A549 (cell line): ENCODE measurements at regions of chr1 and their contacts with region 1.

Region 1: DNA sequence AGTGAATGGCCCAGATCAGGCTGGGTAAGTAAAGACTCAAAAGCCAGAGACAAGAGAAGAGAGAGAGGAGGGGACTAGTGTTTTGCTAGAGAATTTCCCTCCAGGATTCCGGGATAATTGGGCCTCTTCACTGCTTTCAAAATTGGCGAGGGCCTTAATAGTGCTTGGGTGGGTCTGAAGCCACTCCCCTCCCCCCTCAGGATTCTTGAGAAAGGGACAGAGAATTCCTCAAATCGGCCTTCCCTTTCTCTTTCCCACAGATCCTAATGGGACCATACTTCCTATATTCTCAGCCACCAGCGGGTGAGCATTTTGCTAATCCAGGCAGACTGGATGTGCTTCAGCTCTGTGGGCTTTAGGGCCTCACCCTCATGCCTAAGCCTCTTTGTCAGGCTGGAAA is 11.9 kb downstream of the SFN start:
- DNase-seq: no peak
- ATAC-seq: no peak
- H3K4me3 ChIP-seq: no peak overlapping the region
- H3K27ac ChIP-seq: no peak overlapping the region
- H3K4me1 ChIP-seq: no peaks in the 10 kb centered on the region
- CTCF ChIP-seq: no peak
- EP300 ChIP-seq: no peak
- POLR2A ChIP-seq: no peak
- RAD21 ChIP-seq: no peak

Region 2: DNA sequence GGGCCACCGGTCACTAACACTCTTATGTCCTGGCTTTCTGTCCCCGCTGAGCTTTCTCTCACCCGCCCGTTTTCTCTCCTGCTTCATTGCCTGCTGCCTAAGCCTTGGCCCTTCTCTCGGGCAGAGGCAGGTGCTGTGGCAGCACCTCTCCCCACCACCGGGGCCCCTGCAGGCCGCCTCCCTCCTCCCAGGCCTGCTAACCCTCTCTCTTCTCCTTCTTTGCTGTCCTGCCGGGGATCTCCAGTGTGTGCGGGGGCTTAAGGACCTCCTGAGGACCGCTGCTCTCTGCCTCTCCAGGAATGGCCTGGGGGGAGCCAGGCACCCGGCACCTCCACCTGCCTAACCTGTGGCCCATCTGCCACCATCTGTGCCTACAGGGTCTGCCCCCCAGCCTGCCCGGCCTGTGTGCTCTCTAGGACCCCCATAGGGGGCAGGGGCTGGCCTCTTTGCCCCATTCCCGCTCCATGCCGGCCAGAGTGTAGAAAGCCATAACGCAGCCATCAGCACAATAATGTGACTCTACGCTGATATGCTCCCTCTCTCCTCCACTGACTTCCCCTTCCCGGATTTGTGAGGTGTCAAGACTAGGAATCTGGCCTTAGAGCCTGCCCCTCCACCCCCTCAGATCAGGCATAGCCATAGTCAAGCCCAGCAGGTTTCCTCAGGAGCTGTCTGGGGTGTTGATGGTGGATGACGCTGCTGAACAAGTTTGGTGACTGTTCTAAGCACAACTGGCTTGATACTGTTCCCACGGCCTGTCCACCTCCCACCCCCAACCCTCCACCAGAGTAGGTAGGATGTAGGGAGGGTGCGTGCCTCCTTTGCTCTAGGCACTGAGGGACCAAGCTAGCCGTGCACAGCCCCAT is 18.1 kb before region 1 on chr1:
- CTCF ChIA-PET with region 1: interaction called, 16 read pairs
- POLR2A ChIA-PET with region 1: no interaction called
- DNase-seq: no peak
- ATAC-seq: no peak
- H3K4me3 ChIP-seq: no peak overlapping the region
- H3K27ac ChIP-seq: no peak overlapping the region; a peak in 1 of 6 replicates
- H3K4me1 ChIP-seq: peaks cover 20% of the 10 kb centered on the region
- CTCF ChIP-seq: no peak
- EP300 ChIP-seq: no peak
- POLR2A ChIP-seq: no peak
- RAD21 ChIP-seq: no peak

Region 3: GRCh38 chr1:26864610-26865527 is 10.0 kb before region 1 on chr1:
- CTCF ChIA-PET with region 1: interaction called, 36 read pairs
- POLR2A ChIA-PET with region 1: interaction called, 4 read pairs
- DNase-seq: peak; percentile 65 to 96
- ATAC-seq: peak; percentile 76 to 89
- H3K4me3 ChIP-seq: peak overlapping the region; percentile 66
- H3K27ac ChIP-seq: peak overlapping the region; percentile 99 to 100
- H3K4me1 ChIP-seq: peaks cover 30% of the 10 kb centered on the region
- CTCF ChIP-seq: no peak
- EP300 ChIP-seq: no peak
- POLR2A ChIP-seq: peak; percentile 98
- RAD21 ChIP-seq: no peak

Region 4: DNA sequence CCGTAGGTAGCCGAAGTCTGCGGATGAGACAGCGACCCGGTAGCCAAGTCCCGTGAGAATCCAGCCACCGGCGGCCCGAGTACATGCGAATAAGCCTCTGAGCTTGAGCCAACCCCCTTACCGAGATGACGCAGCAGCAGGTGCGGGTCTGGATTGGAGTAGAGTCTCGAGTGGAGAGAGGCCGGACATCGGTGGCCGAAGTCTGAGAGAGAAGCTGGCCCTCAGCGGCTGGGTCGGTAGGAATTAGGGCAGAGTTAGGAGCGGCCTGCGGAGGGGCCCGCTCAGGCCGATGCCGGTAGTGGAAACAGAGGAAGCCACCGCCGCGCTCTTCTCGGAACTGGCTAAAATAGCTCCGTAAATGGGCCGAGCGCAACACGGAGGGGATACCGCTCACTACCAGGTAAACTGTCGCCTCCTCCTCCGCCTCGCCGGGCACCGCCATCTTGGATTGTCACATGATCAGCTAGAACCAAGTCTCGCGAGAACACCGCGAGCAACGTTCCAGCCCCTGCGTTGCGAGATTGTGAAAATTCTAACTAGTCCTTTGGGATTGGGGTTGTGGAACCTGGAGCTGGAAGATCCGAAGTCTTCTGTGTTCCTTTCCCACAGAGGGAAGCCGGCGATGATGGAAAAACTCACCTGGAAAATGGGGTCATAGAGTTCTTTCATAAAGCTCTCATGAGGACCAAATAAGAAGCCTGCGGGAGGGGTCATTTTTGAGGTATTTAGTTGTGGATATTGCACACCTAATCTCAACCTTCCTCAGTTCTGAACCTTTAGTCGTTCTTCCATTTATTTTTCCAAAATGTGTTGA is 25.3 kb after region 1 on chr1 and contains the start of gene GPATCH3:
- CTCF ChIA-PET with region 1: interaction called, 19 read pairs
- POLR2A ChIA-PET with region 1: interaction called, 3 read pairs
- DNase-seq: peak; percentile 86 to 91
- ATAC-seq: peak; percentile 92 to 95
- H3K4me3 ChIP-seq: peak within 1 kb of the TSS; percentile 91
- H3K27ac ChIP-seq: peak within 1 kb of the TSS; percentile 79 to 91
- H3K4me1 ChIP-seq: peaks cover 5% of the 10 kb centered on the region; the same call in 1 of the 3 replicates
- CTCF ChIP-seq: no peak
- EP300 ChIP-seq: no peak
- POLR2A ChIP-seq: peak; percentile 81
- RAD21 ChIP-seq: no peak
- polyA plus RNA-seq, gene GPATCH3: 4.9 and 5.4 TPM in 2 replicates